Testis (tissue), 5 donors: ENCODE measurements at regions of chr6 and their contacts with region 1.

Region 1: DNA sequence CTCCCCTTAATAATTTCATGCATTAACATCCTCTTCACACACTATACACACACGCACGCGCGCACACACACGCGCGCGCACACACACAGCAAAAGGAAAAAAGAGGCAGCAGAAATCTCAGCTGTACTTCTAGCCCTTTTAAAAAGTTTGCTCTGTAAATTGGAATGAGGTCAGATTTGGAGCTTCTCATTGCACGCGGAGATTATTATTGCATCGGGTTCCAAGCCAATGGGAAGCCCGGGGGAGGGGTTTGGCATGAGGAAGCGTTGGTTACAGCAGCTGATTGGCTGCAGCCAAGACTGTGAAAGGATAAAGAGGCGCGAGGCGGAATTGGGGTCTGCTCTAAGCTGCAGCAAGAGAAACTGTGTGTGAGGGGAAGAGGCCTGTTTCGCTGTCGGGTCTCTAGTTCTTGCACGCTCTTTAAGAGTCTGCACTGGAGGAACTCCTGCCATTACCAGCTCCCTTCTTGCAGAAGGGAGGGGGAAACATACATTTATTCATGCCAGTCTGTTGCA is at the start of gene SOX4:
- DNase-seq: peak; percentile 98
- H3K4me3 ChIP-seq: peak within 1 kb of the TSS; percentile 70 to 86
- H3K27ac ChIP-seq: peak within 1 kb of the TSS; percentile 86 to 91
- H3K4me1 ChIP-seq: peaks cover 15% of the 10 kb centered on the region
- H3K27me3 ChIP-seq: no peaks in the 10 kb centered on the region
- CTCF ChIP-seq: no peak
- POLR2A ChIP-seq: peak; percentile 67
- total RNA-seq, gene SOX4: 42.9 to 43.9 TPM

Region 2: DNA sequence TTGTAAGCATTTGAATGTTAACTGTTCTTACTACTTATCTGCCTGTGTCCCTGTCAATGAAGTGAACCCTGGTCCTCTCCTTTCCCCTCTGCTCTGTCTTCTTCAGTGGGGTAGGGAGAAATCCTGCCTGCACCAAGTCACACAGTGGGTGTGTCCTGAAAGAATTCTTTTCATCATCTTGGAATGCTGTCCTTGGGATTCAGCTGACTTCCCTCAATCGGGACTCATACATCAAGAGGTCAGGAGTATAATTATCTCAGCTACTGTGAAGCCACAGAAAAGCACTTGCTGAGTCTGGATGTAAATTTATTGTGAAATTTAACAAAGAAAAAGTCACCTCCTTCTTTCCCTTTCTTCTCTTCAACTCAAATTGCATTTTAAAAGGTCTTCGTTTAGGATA is 328.6 kb after region 1 on chr6:
- intact Hi-C with region 1: loop called (anchors 10 kb)
- DNase-seq: no peak
- H3K4me3 ChIP-seq: no peak overlapping the region
- H3K27ac ChIP-seq: no peak overlapping the region
- H3K4me1 ChIP-seq: no peaks in the 10 kb centered on the region
- H3K27me3 ChIP-seq: no peaks in the 10 kb centered on the region
- CTCF ChIP-seq: no peak
- POLR2A ChIP-seq: no peak